Activated CD4-positive, alpha-beta T cell treated with anti-CD3 and anti-CD28 coated beads, Interleukin-2, amount 10 ng/mL, durations not matched to agents 24 days and 14 days (primary cell): ENCODE measurements at regions of chr16 and their contacts with region 1.

Region 1: GRCh38 chr16:81314603-81315270 is at the start of gene GAN:
- DNase-seq: peak; percentile 98
- H3K4me3 Mint-ChIP-seq: peak within 1 kb of the TSS; percentile 88
- H3K27ac Mint-ChIP-seq: peak within 1 kb of the TSS; percentile 84
- H3K4me1 Mint-ChIP-seq: peaks cover 54% of the 10 kb centered on the region
- H3K27me3 Mint-ChIP-seq: no peaks in the 10 kb centered on the region
- total RNA-seq, gene GAN: 14.1 and 14.3 TPM in 2 replicates

Region 2: DNA sequence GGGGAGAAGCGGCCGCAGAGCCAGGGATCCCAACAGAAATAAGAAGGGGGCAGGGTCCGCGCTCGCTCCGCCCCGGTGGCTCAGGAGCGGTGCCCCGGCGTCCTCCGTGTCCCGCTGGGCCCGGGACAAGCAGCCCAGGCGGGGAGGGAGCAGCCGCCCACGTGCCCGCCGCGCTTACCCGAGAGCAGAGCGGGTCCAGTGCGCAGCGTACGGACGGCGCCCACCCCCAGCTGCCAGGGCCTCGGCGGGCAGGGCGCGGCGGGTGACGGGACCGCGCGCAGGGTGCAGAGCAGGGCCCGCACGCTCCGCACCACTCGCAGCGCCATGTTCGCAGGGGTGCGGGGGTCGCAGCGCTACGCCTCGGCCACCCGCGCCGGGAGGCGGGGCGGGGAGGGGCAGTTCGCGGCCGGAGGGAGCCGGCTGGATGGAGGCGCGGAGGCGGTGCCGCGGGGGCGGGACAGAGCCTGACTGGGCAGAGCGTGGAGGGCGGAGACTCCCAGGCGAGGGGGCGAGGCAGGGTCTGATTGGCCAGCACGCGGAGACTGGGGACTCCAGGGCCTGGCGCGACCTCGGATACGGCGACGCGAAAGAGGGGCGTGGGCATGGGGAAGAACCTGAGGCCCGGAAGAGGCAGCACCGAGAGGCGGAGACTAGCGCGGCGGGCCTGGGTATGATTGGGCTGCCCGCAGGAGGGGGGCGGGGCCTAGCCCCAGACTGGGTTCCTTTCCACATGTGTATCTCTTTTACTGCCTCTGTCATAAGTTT is 218.6 kb before region 1 on chr16 and contains the start of gene GCSH:
- intact Hi-C with region 1: loop called (anchors 1 kb)
- DNase-seq: peak; percentile 100
- H3K4me3 Mint-ChIP-seq: peak within 1 kb of the TSS; percentile 85
- H3K27ac Mint-ChIP-seq: peak within 1 kb of the TSS; percentile 38
- H3K4me1 Mint-ChIP-seq: peaks cover 5% of the 10 kb centered on the region
- H3K27me3 Mint-ChIP-seq: no peaks in the 10 kb centered on the region
- total RNA-seq, gene GCSH: 20.8 and 22.9 TPM in 2 replicates

Region 3: GRCh38 chr16:81261049-81261648 is 53.6 kb before region 1 on chr16:
- intact Hi-C with region 1: loop called (anchors 2 kb)
- DNase-seq: peak; percentile 75
- H3K4me3 Mint-ChIP-seq: no peak overlapping the region
- H3K27ac Mint-ChIP-seq: no peak overlapping the region
- H3K4me1 Mint-ChIP-seq: peaks cover 2% of the 10 kb centered on the region
- H3K27me3 Mint-ChIP-seq: peaks cover 4% of the 10 kb centered on the region

Region 4: GRCh38 chr16:81335669-81336068 is 20.9 kb after region 1 on chr16:
- intact Hi-C with region 1: loop called (anchors 1 kb)
- DNase-seq: no peak
- H3K4me3 Mint-ChIP-seq: no peak overlapping the region
- H3K27ac Mint-ChIP-seq: peak overlapping the region; percentile 52
- H3K4me1 Mint-ChIP-seq: peaks cover 11% of the 10 kb centered on the region
- H3K27me3 Mint-ChIP-seq: no peaks in the 10 kb centered on the region

Region 5: DNA sequence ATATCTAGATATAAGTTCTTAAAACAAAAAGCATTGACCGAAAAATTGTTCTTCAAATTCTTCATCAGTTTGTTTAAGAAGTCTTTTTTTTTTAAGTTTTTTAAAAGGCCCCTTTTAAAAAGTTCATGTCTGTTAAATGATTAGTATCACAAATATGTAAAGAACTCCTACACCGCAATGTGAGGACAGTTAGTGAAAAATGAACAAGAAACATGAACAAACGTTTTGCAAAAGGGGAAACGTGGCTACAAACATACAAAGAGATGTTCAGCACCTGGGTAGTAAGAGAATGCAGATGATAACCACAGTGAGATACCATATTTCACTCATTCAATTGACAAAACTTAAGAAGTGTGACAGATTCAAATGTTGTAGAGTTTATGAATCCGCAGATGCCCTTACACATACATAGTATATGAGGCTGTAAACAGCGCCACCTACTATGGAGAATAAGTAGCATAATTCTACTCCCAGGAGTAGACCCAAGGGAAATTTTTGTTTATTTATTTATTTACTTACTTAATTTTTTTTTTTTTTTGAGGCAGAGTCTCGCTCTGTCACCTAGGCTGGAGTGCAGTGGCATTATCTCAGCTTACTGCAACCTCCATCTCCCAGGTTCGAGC is 35.4 kb after region 1 on chr16:
- intact Hi-C with region 1: loop called (anchors 5 kb)
- DNase-seq: no peak
- H3K4me3 Mint-ChIP-seq: no peak overlapping the region
- H3K27ac Mint-ChIP-seq: no peak overlapping the region
- H3K4me1 Mint-ChIP-seq: peaks cover 7% of the 10 kb centered on the region
- H3K27me3 Mint-ChIP-seq: no peaks in the 10 kb centered on the region

Region 6: GRCh38 chr16:81632392-81633146 is 317.8 kb after region 1 on chr16:
- intact Hi-C with region 1: loop called (anchors 5 kb)
- DNase-seq: peak; percentile 93
- H3K4me3 Mint-ChIP-seq: peak overlapping the region; percentile 82
- H3K27ac Mint-ChIP-seq: peak overlapping the region; percentile 100
- H3K4me1 Mint-ChIP-seq: peaks cover 65% of the 10 kb centered on the region
- H3K27me3 Mint-ChIP-seq: no peaks in the 10 kb centered on the region